ENCODE measurements at regions of chr1 and their contacts with region 1.

Region 1: DNA sequence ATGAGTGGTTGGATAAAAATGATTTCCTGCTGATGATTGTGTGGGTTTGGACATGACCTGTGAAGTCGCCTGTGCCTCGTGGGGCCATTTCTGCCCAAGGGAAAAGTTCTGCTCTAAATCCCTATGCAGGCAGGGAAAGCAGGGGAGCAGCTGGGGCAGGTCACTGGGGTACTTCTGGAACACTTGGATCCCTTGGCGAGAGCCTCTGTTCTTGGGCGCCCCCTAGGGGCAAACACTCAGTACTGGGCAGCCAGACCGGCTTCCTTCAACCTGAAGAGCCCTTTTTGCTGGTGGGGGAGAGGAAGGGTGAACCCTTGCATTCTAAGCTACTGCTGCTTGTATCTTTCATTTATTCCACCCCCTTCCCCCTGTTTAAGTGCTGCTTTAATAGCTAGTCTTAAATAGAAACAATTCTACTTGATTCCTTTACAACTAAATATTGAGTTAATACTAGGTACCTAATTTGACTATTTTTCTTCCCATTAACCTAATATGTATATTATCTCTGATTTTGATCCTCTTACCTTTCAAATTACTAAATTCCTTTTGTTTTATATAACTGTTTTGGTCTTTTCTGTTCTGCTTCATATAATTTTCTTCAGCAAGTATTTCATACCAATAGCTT is 5.1 kb upstream of the CLEC20A start:
- DNase-seq: peak; percentile 56 to 96
- H3K4me3 ChIP-seq: no peak overlapping the region
- H3K27ac ChIP-seq: no peak overlapping the region
- H3K4me1 ChIP-seq: no peaks in the 10 kb centered on the region; a peak in 1 of 7 replicates
- H3K27me3 ChIP-seq: no peaks in the 10 kb centered on the region
- CTCF ChIP-seq: peak; percentile 84 to 95 (median 87)
- EP300 ChIP-seq: no peak
- POLR2A ChIP-seq: no peak
- RAD21 ChIP-seq: peak; percentile 70 to 79

Region 2: GRCh38 chr1:178093205-178093957 is 408.4 kb before region 1 on chr1:
- CTCF ChIA-PET with region 1: no interaction called
- POLR2A ChIA-PET with region 1: no interaction called
- DNase-seq: peak; percentile 86 to 87
- H3K4me3 ChIP-seq: peak overlapping the region; percentile 82 to 100 (median 92)
- H3K27ac ChIP-seq: peak overlapping the region; percentile 54; the same call in 1 of the 2 replicates
- H3K4me1 ChIP-seq: peaks cover 0 to 9% (median 8%) of the 10 kb centered on the region in 4 experiments; a peak in 5 of 7 replicates
- H3K27me3 ChIP-seq: no peaks in the 10 kb centered on the region
- CTCF ChIP-seq: peak in 1 of 3 experiments; percentile 4; a peak in 1 of 4 replicates
- EP300 ChIP-seq: peak in 1 of 2 experiments; percentile 60; a peak in 1 of 3 replicates
- POLR2A ChIP-seq: peak in 1 of 2 experiments; percentile 69; a peak in 1 of 3 replicates
- RAD21 ChIP-seq: no peak; a peak in 1 of 4 replicates

Region 3: DNA sequence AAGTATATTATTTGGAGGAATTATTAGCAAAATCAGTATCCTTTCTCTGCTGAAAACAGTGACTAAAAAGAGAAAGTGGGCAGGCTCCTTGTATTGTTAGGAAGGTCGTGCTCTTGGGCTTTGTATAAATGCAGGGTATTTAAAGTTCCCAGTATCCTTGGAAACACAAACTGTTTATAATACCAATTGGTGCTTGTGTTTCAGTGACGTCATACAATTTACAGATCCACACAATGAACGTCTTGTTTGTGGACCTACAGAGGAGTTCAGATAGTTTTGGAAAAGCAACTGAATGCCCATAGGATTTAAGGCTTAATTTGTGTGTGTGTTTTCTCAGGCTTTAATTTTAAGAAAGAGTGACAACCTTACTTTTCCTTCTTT is 239.7 kb before region 1 on chr1:
- CTCF ChIA-PET with region 1: no interaction called
- POLR2A ChIA-PET with region 1: no interaction called
- DNase-seq: no peak
- H3K4me3 ChIP-seq: no peak overlapping the region
- H3K27ac ChIP-seq: 0 out of 2 replicates have a peak overlapping the region, but pooled peaks have one; percentile 13
- H3K4me1 ChIP-seq: peaks cover 3 to 22% (median 7%) of the 10 kb centered on the region in 4 experiments; a peak in 5 of 7 replicates
- H3K27me3 ChIP-seq: no peaks in the 10 kb centered on the region
- CTCF ChIP-seq: no peak
- EP300 ChIP-seq: no peak
- POLR2A ChIP-seq: no peak
- RAD21 ChIP-seq: no peak

Region 4: DNA sequence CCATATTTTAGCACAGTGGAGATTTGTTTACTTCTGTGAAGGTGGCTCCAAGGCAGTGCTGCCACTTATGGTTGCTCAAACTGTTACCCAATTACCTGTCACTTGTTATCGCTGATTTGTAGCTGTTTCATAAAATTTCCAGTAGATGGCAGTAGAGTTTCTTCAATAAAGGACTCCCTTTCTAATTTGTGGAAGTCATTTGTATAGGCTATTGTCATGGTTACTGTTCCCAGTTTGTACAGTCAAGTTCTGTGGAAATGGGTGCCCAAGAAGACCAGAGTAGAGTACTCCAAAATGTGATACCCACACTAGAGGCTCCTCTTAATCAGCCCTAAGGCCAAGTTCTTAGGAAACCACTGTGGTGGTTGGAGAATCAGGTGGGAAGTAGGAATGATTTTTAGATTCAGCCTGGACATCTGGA is 191.1 kb before region 1 on chr1:
- CTCF ChIA-PET with region 1: interaction called, 60 read pairs
- POLR2A ChIA-PET with region 1: no interaction called
- DNase-seq: no peak
- H3K4me3 ChIP-seq: no peak overlapping the region
- H3K27ac ChIP-seq: no peak overlapping the region
- H3K4me1 ChIP-seq: no peaks in the 10 kb centered on the region; a peak in 2 of 7 replicates
- H3K27me3 ChIP-seq: no peaks in the 10 kb centered on the region
- CTCF ChIP-seq: peak in 2 of 3 experiments; percentile 63 to 74; a peak in 2 of 4 replicates
- EP300 ChIP-seq: no peak
- POLR2A ChIP-seq: no peak
- RAD21 ChIP-seq: peak; percentile 83 to 85

Region 5: GRCh38 chr1:178371235-178371634 is 130.6 kb before region 1 on chr1:
- CTCF ChIA-PET with region 1: interaction called, 16 read pairs
- POLR2A ChIA-PET with region 1: no interaction called
- DNase-seq: no peak
- H3K4me3 ChIP-seq: peak overlapping the region in 3 of 4 experiments; percentile 2 to 38 (median 10); a peak in 4 of 8 replicates
- H3K27ac ChIP-seq: no peak overlapping the region
- H3K4me1 ChIP-seq: peaks cover 0 to 7% (median 6%) of the 10 kb centered on the region in 4 experiments; a peak in 3 of 7 replicates
- H3K27me3 ChIP-seq: no peaks in the 10 kb centered on the region
- CTCF ChIP-seq: no peak
- EP300 ChIP-seq: no peak
- POLR2A ChIP-seq: no peak
- RAD21 ChIP-seq: no peak

Region 6: DNA sequence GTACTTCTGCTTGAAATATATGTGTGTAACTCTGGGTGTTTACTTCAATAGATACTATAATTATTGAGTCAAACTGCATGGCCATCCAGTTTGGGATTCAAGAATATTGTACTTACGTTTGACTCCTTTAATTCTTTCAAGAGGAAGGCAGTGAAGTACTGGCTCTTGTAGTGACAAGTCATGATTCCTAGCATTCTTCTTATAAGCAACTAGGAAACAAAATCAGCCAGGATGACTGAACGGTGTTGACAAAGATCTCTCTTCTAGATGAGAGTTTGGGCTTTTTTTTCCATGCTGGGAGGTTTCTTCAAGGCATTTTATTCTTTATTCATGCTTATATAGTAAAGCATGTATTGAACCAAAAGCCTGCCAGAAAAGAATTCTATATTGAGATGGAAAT is 63.4 kb before region 1 on chr1:
- CTCF ChIA-PET with region 1: interaction called, 17 read pairs
- POLR2A ChIA-PET with region 1: no interaction called
- DNase-seq: no peak
- H3K4me3 ChIP-seq: no peak overlapping the region
- H3K27ac ChIP-seq: no peak overlapping the region
- H3K4me1 ChIP-seq: no peaks in the 10 kb centered on the region; a peak in 2 of 7 replicates
- H3K27me3 ChIP-seq: no peaks in the 10 kb centered on the region
- CTCF ChIP-seq: no peak
- EP300 ChIP-seq: no peak
- POLR2A ChIP-seq: no peak
- RAD21 ChIP-seq: no peak

Region 7: DNA sequence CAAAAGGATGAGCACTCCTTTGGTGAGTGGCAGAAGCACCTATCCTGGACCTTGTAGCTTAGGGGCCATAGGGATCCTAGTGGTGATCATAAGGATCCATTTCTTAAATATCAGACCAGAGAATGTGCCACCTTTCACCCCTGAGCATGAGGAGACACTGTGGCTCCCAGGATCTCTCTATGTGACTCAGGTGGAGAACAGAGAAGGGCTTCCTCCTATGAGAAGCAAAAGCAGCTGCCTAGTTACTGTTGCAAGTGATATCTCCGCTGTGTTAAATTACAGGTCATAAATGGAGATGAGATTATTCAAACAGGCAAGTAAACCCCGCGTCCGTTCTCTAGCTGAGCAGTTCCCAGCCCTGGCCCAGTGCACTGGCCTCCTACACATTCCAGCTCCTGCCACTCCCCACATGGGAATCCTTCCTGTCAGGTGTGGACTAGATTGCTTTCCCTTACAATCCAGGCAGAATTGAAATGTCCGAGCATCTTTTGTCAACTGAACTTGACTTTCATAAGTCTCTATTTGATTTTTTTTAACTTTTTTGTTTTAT is 31.3 kb before region 1 on chr1:
- CTCF ChIA-PET with region 1: interaction called, 95 read pairs
- POLR2A ChIA-PET with region 1: no interaction called
- DNase-seq: no peak
- H3K4me3 ChIP-seq: no peak overlapping the region
- H3K27ac ChIP-seq: no peak overlapping the region
- H3K4me1 ChIP-seq: no peaks in the 10 kb centered on the region
- H3K27me3 ChIP-seq: no peaks in the 10 kb centered on the region
- CTCF ChIP-seq: no peak
- EP300 ChIP-seq: no peak
- POLR2A ChIP-seq: no peak
- RAD21 ChIP-seq: no peak

Region 8: GRCh38 chr1:178532392-178532791 is 30.6 kb after region 1 on chr1:
- CTCF ChIA-PET with region 1: interaction called, 238 read pairs
- POLR2A ChIA-PET with region 1: no interaction called
- DNase-seq: peak; percentile 54 to 94
- H3K4me3 ChIP-seq: no peak overlapping the region; a peak in 1 of 8 replicates
- H3K27ac ChIP-seq: no peak overlapping the region
- H3K4me1 ChIP-seq: peaks cover 0 to 2% (median under 1%) of the 10 kb centered on the region in 4 experiments; a peak in 1 of 7 replicates
- H3K27me3 ChIP-seq: no peaks in the 10 kb centered on the region; a peak in 1 of 7 replicates
- CTCF ChIP-seq: peak; percentile 89 to 96 (median 94)
- EP300 ChIP-seq: no peak
- POLR2A ChIP-seq: no peak
- RAD21 ChIP-seq: peak; percentile 96 to 97

Region 9: GRCh38 chr1:178644308-178645120 is 142.7 kb after region 1 on chr1:
- CTCF ChIA-PET with region 1: no interaction called
- POLR2A ChIA-PET with region 1: no interaction called
- DNase-seq: no peak
- H3K4me3 ChIP-seq: no peak overlapping the region
- H3K27ac ChIP-seq: no peak overlapping the region
- H3K4me1 ChIP-seq: peaks cover 3 to 8% (median 4%) of the 10 kb centered on the region in 4 experiments; a peak in 4 of 7 replicates
- H3K27me3 ChIP-seq: no peaks in the 10 kb centered on the region
- CTCF ChIP-seq: no peak
- EP300 ChIP-seq: no peak
- POLR2A ChIP-seq: no peak
- RAD21 ChIP-seq: no peak

Region 10: GRCh38 chr1:178796013-178796412 is 294.2 kb after region 1 on chr1:
- CTCF ChIA-PET with region 1: no interaction called
- POLR2A ChIA-PET with region 1: no interaction called
- DNase-seq: no peak
- H3K4me3 ChIP-seq: no peak overlapping the region
- H3K27ac ChIP-seq: no peak overlapping the region
- H3K4me1 ChIP-seq: no peaks in the 10 kb centered on the region
- H3K27me3 ChIP-seq: no peaks in the 10 kb centered on the region
- CTCF ChIP-seq: no peak
- EP300 ChIP-seq: no peak
- POLR2A ChIP-seq: no peak
- RAD21 ChIP-seq: no peak